ENCODE measurements at regions of chr14 and their contacts with region 1.

Region 1: GRCh38 chr14:49598485-49599300 is at the start of gene LRR1:
- DNase-seq: peak; percentile 94
- ATAC-seq: peak; percentile 83
- H3K4me3 Mint-ChIP-seq: peak within 1 kb of the TSS; percentile 95
- H3K27ac Mint-ChIP-seq: peak within 1 kb of the TSS; percentile 97
- H3K4me1 Mint-ChIP-seq: peaks cover 28% of the 10 kb centered on the region
- H3K27me3 Mint-ChIP-seq: peaks cover 2% of the 10 kb centered on the region
- total RNA-seq, gene LRR1: 43.7 to 44.3 TPM

Region 2: DNA sequence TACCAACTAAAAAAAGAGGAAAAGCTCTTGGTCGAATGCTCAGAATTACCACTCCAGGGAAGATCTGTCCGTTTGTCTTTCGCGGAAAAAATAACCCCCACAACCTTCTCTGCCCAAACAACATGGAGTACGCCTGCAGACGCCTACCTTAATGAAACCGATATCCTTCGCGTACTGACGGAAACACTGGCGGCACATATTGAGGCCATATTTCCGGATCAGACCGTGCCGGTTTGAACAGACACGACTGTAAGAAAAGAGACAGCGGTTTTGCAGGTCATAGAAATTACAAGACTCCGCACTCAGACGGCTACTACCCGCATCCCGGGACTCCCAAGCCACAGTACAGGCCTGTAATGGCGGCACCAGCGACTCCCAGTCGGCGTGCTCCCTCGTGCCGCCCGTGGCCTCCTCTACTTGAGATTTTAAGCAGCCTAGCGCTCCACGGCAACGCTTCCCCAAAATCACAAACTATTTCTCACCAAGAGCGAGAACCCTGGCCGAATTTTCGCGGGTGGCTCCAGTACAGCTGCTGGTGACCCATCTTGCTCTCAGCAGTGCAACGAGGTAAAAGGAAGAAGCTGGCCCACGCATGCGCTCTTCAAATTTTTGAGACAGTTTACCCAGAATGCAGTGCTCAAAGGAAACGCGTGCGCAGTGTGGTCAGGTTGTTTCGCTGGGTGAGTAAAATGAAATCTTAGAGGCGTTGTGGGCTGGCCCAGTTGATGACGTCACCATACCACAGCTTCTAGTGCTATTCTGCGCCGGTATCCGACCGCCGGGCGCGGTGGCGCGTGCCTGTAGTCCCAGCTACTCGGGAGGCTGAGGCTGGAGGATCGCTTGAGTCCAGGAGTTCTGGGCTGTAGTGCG is 12.7 kb before region 1 on chr14 and contains the start of gene RPS29:
- POLR2A ChIA-PET with region 1: interaction called, 79 read pairs
- DNase-seq: peak; percentile 98
- ATAC-seq: peak; percentile 89
- H3K4me3 Mint-ChIP-seq: peak within 1 kb of the TSS; percentile 94
- H3K27ac Mint-ChIP-seq: peak within 1 kb of the TSS; percentile 99
- H3K4me1 Mint-ChIP-seq: peaks cover 42% of the 10 kb centered on the region
- H3K27me3 Mint-ChIP-seq: no peaks in the 10 kb centered on the region
- total RNA-seq, gene RPS29: 1,762 to 1,786 TPM

Measured in activated naive CD8-positive, alpha-beta T cell treated with anti-CD3 and anti-CD28 coated beads, Interleukin-2, amount 10 ng/mL, durations not matched to agents 7 days and 5 days (primary cell).